Gastrocnemius medialis (tissue), 4 donors: ENCODE measurements at regions of chr11 and their contacts with region 1.

Region 1: GRCh38 chr11:128884703-128885338 is 6.3 kb upstream of the KCNJ5 start:
- DNase-seq: peak in 1 of 2 donors; percentile 45
- ATAC-seq: peak; percentile 68 to 71
- H3K4me3 ChIP-seq: no peak overlapping the region
- H3K27ac ChIP-seq: no peak overlapping the region
- H3K4me1 ChIP-seq: no peaks in the 10 kb centered on the region
- H3K27me3 ChIP-seq: peaks cover 1 to 16% (median 5%) of the 10 kb centered on the region in 3 donors
- CTCF ChIP-seq: peak; percentile 71 to 87 (median 76)
- POLR2A ChIP-seq: no peak

Region 2: DNA sequence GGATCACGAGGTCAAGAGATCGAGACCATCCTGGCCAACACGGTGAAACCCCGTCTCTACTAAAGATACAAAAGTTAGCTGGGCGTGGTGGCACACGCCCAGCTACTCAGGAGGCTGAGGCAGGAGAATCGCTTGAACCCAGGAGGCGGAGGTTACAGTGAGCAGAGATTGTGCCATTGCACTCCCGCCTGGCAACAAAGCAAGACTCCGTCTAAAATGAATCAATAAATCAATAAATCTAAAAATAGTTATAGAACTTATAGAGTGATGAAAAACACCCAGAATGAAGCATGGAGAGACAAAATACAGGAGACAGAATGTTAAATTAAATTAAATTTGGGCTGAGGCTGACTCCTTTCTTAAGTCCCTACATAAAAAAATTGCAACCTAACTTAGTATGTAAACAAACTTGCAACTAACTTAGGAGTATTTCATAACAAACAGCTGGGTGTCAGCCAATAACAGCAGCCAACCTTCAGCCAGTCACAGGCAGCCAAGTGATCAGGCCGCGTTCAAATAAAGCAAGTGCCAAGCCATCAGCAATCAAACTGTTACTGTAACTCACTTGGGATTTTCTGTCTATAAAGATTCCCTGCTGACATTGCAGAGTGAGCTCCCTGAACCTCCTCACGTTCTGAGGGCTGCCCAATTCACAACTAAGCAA is 65.1 kb after region 1 on chr11:
- in situ Hi-C with region 1: loop called (anchors 5 kb)
- intact Hi-C with region 1: no loop called
- DNase-seq: no peak
- ATAC-seq: no peak
- H3K4me3 ChIP-seq: no peak overlapping the region
- H3K27ac ChIP-seq: no peak overlapping the region
- H3K4me1 ChIP-seq: no peaks in the 10 kb centered on the region
- H3K27me3 ChIP-seq: no peaks in the 10 kb centered on the region
- CTCF ChIP-seq: no peak
- POLR2A ChIP-seq: no peak

Region 3: GRCh38 chr11:128956401-128957201 is 71.8 kb after region 1 on chr11:
- in situ Hi-C with region 1: loop called (anchors 5 kb)
- intact Hi-C with region 1: loop called (anchors 1 kb)
- DNase-seq: no peak
- ATAC-seq: peak; percentile 45 to 49
- H3K4me3 ChIP-seq: no peak overlapping the region
- H3K27ac ChIP-seq: no peak overlapping the region
- H3K4me1 ChIP-seq: no peaks in the 10 kb centered on the region
- H3K27me3 ChIP-seq: no peaks in the 10 kb centered on the region
- CTCF ChIP-seq: peak; percentile 44 to 65 (median 62)
- POLR2A ChIP-seq: no peak